ENCODE measurements at regions of chr18 and their contacts with region 1.

Region 1: GRCh38 chr18:47775961-47776360 is 154.5 kb downstream of the SMAD2 start:
- DNase-seq: no peak
- H3K4me3 ChIP-seq: no peak overlapping the region
- H3K27ac ChIP-seq: no peak overlapping the region
- H3K4me1 ChIP-seq: no peaks in the 10 kb centered on the region
- H3K27me3 ChIP-seq: no peaks in the 10 kb centered on the region
- CTCF ChIP-seq: peak in 1 of 3 experiments; percentile 32

Region 2: GRCh38 chr18:47826157-47827074 is 50.5 kb after region 1 on chr18:
- intact Hi-C with region 1: no loop called
- DNase-seq: no peak
- H3K4me3 ChIP-seq: no peak overlapping the region
- H3K27ac ChIP-seq: no peak overlapping the region
- H3K4me1 ChIP-seq: no peaks in the 10 kb centered on the region
- H3K27me3 ChIP-seq: no peaks in the 10 kb centered on the region
- CTCF ChIP-seq: no peak

Region 3: GRCh38 chr18:48022531-48023329 is 246.8 kb after region 1 on chr18:
- intact Hi-C with region 1: loop called (anchors 2 kb)
- DNase-seq: peak in 1 of 2 donors; percentile 64
- H3K4me3 ChIP-seq: no peak overlapping the region
- H3K27ac ChIP-seq: no peak overlapping the region
- H3K4me1 ChIP-seq: peaks cover 5 to 8% of the 10 kb centered on the region in 2 donors
- H3K27me3 ChIP-seq: no peaks in the 10 kb centered on the region
- CTCF ChIP-seq: peak; percentile 42 to 58 (median 47)

Measured in ascending aorta (tissue), 2 donors.